Transverse colon (tissue), 4 donors: ENCODE measurements at regions of chr1 and their contacts with region 1.

Region 1: DNA sequence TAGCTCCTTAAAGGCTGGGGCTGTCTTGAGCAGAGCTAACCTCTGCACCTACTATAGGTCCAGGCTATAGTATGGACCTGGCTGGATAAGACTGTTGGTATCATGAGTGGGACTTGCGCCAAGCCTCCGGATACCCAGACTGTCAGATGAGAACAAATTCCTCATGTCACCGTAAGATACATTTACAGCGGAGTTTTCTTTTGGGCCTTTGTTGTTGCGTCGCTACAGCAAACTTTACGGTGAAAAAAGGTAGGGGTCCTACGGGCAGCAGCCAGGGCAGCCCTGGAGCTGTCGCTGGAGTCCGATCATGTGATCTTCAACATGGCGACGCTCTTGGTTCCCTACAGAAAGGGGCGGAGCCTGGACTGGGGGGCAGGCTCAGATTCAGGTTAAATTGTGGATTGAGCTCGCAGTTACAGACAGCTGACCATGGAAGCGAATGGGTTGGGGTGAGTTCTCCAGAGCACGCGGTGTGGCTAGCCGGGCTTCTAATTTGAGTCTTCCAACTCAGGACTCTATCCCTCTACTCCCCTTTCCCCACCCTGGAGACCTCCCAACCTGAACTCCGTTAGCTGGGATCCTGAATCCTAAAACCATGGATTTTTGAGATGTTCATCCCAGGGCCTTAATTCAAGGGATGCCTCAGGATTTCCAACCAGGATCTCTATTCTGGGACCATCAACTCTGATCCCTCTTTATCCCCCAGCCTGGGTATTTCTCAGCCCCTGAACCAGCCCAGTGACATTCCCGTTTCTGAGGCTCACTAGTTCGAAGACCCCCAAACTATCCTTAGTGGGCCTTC is at the start of gene UROD:
- DNase-seq: peak; percentile 93
- H3K4me3 ChIP-seq: peak within 1 kb of the TSS; percentile 79 to 94 (median 86)
- H3K27ac ChIP-seq: peak within 1 kb of the TSS; percentile 88 to 93 (median 91)
- H3K4me1 ChIP-seq: peaks cover 18 to 39% (median 34%) of the 10 kb centered on the region in 4 donors
- H3K27me3 ChIP-seq: no peaks in the 10 kb centered on the region
- CTCF ChIP-seq: no peak
- EP300 ChIP-seq: no peak
- POLR2A ChIP-seq: peak; percentile 62
- total RNA-seq, gene UROD: 46.4 to 85.7 (median 63.9) TPM

Region 2: DNA sequence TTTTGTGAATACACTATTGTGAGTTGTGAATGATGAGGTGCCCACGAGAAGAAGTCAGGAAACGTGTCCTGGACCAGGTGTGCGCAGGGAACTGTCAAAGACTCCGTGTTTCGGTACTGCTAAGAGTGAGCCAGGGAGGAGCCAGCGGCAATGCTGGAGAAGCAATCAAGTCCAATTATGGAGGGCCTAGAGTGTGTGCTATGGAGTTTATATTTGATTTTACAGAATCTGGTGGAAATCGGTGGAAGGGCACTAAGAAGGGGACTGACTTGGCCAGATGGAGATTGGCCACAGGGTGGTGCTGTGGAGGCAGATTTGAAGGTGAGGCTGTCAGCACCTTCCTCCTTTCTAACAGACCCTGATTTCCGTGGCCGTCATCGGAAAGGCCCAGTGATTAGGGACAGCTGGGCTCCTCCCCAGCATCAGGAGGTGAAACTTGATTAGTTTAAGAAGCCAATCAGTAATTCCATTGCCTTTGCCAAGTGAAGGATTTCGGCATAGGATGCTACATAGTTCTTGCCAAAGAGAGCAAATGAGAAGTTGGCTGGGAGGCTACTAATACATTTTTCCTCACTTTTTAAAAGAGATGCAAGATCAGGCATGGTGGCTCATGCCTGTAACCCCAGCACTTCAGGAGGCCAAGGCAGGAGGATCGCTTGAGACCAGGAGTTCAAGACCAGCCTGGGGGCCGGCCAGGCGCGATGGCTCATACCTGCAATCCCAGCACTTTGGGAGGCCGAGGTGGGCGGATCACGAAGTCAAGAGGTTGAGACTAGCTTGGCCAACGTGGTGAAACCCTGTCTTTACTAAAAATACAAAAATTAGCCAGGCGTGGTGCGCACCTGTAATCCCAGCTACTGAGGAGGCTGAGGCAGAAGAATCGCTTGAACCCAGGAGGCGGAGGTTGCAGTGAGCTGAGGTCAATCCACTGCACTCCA is 176.0 kb before region 1 on chr1:
- in situ Hi-C with region 1: loop called in 1 of 4 experiments (anchors 25 kb)
- intact Hi-C with region 1: no loop called
- DNase-seq: peak; percentile 90
- H3K4me3 ChIP-seq: no peak overlapping the region
- H3K27ac ChIP-seq: no peak overlapping the region
- H3K4me1 ChIP-seq: peaks cover 0 to 6% (median 2%) of the 10 kb centered on the region in 4 donors
- H3K27me3 ChIP-seq: no peaks in the 10 kb centered on the region
- CTCF ChIP-seq: peak; percentile 76 to 85 (median 81)
- EP300 ChIP-seq: no peak
- POLR2A ChIP-seq: no peak

Region 3: DNA sequence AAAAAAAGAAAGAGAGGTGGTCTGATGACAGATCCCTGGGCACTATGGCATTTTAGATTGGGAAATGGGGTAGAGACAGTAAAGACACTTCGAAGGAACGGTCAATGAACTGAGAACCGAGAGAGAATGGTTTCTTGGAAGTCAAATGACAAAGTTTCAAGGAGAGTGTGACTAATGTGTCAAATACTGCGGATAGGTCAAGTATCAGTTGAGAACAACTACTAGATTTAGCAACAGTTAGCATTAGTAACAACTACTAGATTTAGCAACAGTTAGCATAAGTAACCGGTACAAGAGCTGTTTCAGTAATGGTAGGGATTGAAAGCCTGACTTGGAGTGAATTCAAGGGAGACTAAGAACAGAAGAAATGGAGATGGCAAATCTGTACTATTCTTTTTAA is 35.0 kb after region 1 on chr1:
- in situ Hi-C with region 1: no loop called
- intact Hi-C with region 1: no loop called
- DNase-seq: no peak
- H3K4me3 ChIP-seq: no peak overlapping the region
- H3K27ac ChIP-seq: no peak overlapping the region
- H3K4me1 ChIP-seq: peaks cover 0 to 5% (median 0%) of the 10 kb centered on the region in 4 donors
- H3K27me3 ChIP-seq: no peaks in the 10 kb centered on the region
- CTCF ChIP-seq: no peak
- EP300 ChIP-seq: no peak
- POLR2A ChIP-seq: no peak

Region 4: GRCh38 chr1:45221716-45222115 is 209.7 kb after region 1 on chr1:
- in situ Hi-C with region 1: loop called in 2 of 4 experiments (anchors 10 kb)
- intact Hi-C with region 1: no loop called
- DNase-seq: no peak
- H3K4me3 ChIP-seq: no peak overlapping the region
- H3K27ac ChIP-seq: no peak overlapping the region
- H3K4me1 ChIP-seq: no peaks in the 10 kb centered on the region
- H3K27me3 ChIP-seq: no peaks in the 10 kb centered on the region
- CTCF ChIP-seq: no peak
- EP300 ChIP-seq: no peak
- POLR2A ChIP-seq: no peak

Region 5: DNA sequence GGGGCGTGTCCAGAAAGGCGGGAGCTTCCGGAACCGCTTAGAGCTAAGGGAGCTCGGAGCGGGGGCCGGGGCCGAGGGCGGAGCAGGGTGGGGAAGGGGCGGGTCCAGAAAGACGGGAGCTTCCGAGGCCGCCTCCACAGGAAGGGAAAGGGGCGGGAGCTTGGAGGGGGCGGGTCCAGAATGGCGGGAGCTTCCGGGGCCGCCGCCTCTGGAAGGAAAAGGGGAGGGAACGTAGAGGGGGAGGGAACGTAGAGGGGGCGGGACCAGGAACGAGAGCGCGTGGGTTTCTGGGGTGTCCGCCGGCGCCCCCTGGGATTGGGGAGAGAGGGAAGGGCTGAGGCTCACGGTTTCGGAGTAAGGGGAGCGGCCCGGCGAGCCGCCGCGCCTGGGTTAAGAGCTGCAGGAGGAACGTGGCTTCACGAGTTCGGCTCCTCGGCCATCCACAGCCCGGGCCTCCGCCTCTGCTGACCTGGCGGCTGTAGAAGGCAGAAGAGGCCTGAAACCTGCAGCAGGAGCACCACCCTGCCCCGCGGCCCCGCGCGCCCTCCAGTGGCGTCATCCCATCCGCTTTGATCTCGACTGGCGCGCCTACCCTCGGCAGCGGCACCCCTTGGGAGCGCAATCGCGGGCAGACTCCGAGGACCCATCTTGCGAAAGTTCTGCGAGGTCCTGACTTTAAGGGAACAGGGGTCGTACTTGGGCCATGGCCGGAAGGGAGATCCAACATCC is 291.7 kb after region 1 on chr1:
- in situ Hi-C with region 1: loop called in 2 of 4 experiments (anchors 5 to 10 kb)
- intact Hi-C with region 1: loop called (anchors 1 kb)
- DNase-seq: peak; percentile 99
- H3K4me3 ChIP-seq: peak overlapping the region; percentile 52 to 94 (median 70)
- H3K27ac ChIP-seq: peak overlapping the region; percentile 85 to 98 (median 92)
- H3K4me1 ChIP-seq: peaks cover 8 to 16% (median 10%) of the 10 kb centered on the region in 4 donors
- H3K27me3 ChIP-seq: no peaks in the 10 kb centered on the region
- CTCF ChIP-seq: peak; percentile 58 to 93 (median 75)
- EP300 ChIP-seq: no peak
- POLR2A ChIP-seq: peak; percentile 86